MCF 10A (cell line): ENCODE measurements at regions of chr3 and their contacts with region 1.

Region 1: DNA sequence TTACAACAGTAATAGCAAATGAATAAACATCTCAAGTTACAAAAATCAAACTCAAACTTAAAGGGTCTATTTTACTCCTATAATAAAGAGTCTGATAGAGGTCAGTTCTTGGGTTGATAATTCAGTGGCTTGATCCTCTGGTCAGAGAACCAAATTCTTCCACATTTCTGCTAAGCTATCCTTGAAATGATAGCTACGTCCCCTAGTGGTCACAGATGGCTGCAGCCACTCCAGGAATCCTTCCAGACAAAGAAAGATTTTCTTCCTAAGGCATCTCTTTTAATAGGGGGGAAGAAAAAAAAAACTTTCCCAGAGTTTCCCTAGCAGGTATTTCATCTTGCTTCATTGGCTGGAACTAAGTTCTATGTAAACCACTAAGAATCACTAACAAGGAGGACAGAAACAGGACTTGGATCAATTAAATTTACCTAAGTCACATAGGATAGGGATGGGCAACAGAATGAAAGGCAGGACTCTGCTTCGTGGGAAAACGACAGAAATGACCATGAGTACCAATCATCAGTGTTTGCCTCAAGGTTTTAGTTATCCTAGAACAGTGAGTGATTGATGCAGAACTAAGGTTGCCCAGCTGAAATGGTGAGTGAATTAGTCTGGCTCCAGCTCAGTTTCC is 160.7 kb downstream of the STAC start:
- DNase-seq: peak; percentile 50
- H3K4me3 Mint-ChIP-seq: no peak overlapping the region
- H3K27ac Mint-ChIP-seq: no peak overlapping the region
- H3K4me1 Mint-ChIP-seq: no peaks in the 10 kb centered on the region
- H3K27me3 Mint-ChIP-seq: no peaks in the 10 kb centered on the region
- CTCF ChIP-seq: peak; percentile 91

Region 2: DNA sequence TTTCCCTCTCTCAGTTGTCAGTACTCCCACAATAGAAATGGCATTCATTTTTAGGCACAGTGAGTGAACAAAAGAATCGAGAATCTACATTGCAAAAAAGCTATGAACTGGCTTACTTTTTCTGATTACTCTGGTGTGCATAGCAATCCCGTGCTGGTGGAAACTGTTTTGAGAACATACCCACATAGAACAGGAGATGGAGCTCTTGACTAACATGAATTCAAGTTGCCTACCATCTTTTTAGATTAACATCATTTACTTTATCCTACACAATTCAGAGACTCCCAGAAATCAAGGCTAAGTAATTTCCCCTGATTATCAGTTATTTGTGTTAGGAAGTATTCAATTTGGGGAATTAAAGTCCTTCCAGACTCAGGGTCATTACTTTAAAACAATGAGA is 575.1 kb before region 1 on chr3:
- CTCF ChIA-PET with region 1: interaction called, 3 read pairs
- POLR2A ChIA-PET with region 1: no interaction called
- intact Hi-C with region 1: loop called (anchors 2 kb)
- DNase-seq: peak; percentile 42
- H3K4me3 Mint-ChIP-seq: no peak overlapping the region
- H3K27ac Mint-ChIP-seq: no peak overlapping the region
- H3K4me1 Mint-ChIP-seq: no peaks in the 10 kb centered on the region
- H3K27me3 Mint-ChIP-seq: peaks cover 45% of the 10 kb centered on the region
- CTCF ChIP-seq: peak; percentile 50

Region 3: DNA sequence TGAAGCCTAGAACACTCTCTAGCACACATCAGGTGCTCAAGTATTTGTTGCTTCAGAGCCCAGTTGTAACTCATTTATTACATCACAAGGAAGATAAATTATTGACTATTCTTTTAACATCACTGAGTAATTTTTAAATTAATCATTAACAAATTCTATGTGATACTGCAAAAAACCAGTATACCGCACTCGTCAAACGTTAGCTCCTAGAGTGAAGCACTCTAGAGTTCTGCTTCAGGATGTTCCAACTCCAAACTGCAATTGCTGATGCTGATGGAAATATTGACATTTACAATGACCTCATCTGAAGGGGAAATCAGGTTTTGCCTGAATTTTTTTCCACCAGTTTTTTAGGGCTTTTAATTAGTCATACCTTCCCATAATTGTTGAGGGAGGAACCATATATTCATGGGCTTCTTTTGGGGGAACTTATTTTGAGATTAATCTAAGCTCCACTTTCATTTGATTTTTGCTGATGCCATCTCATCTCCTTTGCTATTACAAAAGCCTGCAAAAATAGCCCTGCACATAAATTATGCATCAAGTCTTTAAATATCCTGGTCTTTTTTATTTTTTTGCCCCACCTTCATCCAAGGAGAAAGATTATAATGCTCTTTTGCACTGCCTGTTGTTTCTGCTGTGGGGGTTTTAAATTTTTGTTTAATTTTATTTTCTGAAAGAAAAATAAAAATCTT is 283.7 kb before region 1 on chr3:
- CTCF ChIA-PET with region 1: no interaction called
- POLR2A ChIA-PET with region 1: no interaction called
- intact Hi-C with region 1: loop called (anchors 5 kb)
- DNase-seq: no peak
- H3K4me3 Mint-ChIP-seq: no peak overlapping the region
- H3K27ac Mint-ChIP-seq: no peak overlapping the region
- H3K4me1 Mint-ChIP-seq: no peaks in the 10 kb centered on the region
- H3K27me3 Mint-ChIP-seq: no peaks in the 10 kb centered on the region
- CTCF ChIP-seq: no peak

Region 4: DNA sequence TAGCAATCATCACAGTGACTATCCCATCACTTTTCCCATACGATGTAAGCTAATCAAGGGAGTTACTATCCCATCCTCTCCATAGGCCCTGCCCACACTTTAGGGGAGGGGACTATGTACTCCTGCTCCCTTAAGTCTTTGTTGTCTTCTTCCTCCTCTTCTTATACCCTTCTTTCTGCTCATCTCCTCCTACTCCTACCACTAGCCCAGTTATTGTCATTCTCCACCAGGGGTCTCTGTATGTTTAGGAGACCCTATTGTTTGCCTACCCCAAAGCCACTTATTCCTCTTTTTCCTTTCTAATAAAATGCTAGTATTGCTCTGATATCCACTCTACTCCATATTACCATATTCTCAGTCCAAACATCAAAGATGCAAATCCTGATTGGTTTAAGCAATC is 132.9 kb before region 1 on chr3:
- CTCF ChIA-PET with region 1: no interaction called
- POLR2A ChIA-PET with region 1: no interaction called
- intact Hi-C with region 1: loop called (anchors 1 kb)
- DNase-seq: no peak
- H3K4me3 Mint-ChIP-seq: no peak overlapping the region
- H3K27ac Mint-ChIP-seq: no peak overlapping the region
- H3K4me1 Mint-ChIP-seq: no peaks in the 10 kb centered on the region
- H3K27me3 Mint-ChIP-seq: no peaks in the 10 kb centered on the region
- CTCF ChIP-seq: no peak

Region 5: DNA sequence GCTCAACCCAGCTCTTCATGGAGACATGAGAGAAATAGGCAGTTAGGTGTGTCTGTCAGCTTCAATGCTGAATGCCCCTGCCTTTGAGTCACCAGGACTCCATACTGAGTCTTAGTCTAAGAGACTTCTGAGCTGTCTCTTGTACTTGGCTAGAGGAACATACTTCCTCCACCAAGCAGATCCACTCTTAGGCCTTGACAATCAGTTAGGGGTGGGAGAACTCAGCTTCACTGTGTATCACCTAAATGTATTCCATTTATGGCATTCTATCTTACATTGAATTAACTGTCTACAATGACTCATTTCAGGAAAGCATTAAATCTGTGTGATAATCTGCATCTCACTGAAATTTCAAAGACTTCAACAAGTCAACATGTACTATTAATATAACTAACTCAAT is 94.7 kb before region 1 on chr3:
- CTCF ChIA-PET with region 1: no interaction called
- POLR2A ChIA-PET with region 1: no interaction called
- intact Hi-C with region 1: no loop called
- DNase-seq: no peak
- H3K4me3 Mint-ChIP-seq: no peak overlapping the region
- H3K27ac Mint-ChIP-seq: peak overlapping the region; percentile 94
- H3K4me1 Mint-ChIP-seq: peaks cover 17% of the 10 kb centered on the region
- H3K27me3 Mint-ChIP-seq: no peaks in the 10 kb centered on the region
- CTCF ChIP-seq: no peak

Region 6: DNA sequence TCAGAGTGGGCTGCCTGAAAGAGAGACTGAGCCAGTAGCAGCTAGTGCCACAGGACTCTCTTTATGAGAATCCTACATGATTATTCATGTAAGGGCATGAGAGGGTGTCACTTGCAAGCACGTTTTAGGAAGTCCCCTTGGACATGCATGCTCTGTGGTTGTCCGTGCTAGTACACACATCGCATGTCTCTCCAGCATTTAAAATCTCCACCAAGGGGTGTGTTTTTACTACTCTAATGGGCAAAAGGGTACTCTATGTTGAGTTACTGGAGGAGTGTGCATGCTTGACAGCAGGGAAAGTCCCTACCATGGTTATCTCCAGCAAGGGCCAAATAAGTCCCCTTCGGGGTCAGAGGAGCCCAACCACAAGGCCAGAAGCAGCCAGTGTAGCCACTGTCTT is 152.7 kb after region 1 on chr3:
- CTCF ChIA-PET with region 1: no interaction called
- POLR2A ChIA-PET with region 1: no interaction called
- intact Hi-C with region 1: no loop called
- DNase-seq: no peak
- H3K4me3 Mint-ChIP-seq: no peak overlapping the region
- H3K27ac Mint-ChIP-seq: no peak overlapping the region
- H3K4me1 Mint-ChIP-seq: peaks cover 30% of the 10 kb centered on the region
- H3K27me3 Mint-ChIP-seq: no peaks in the 10 kb centered on the region
- CTCF ChIP-seq: no peak